ENCODE measurements at regions of chr9 and their contacts with region 1.

Region 1: DNA sequence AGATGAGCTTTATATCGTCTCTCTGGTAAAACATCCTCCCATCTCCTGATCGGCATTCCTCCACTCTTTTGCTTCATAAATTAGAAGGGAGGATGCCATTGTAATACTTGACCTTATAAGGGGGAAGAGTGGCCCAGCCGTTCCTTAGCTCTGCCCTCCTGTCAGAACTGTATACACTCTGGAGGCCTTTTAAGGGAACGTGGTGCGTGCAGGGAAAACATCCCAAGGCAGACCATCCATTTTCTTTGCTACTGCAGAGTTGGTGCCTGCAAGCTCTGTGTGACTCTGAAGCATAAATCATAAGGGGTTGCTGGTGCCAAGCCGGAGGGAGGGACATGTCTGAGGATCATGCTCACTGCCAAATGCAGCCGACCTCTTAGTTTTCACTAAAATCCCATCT is 90.4 kb downstream of the PGM5 start:
- DNase-seq: peak in 1 of 2 donors; percentile 83
- H3K4me3 ChIP-seq: no peak overlapping the region
- H3K27ac ChIP-seq: peak overlapping the region in 3 of 5 donors; percentile 40 to 83 (median 65)
- H3K4me1 ChIP-seq: peaks cover 0 to 74% (median 19%) of the 10 kb centered on the region in 4 donors
- H3K27me3 ChIP-seq: no peaks in the 10 kb centered on the region
- CTCF ChIP-seq: no peak
- EP300 ChIP-seq: peak; percentile 34
- POLR2A ChIP-seq: no peak

Region 2: GRCh38 chr9:68493958-68494577 is 47.2 kb after region 1 on chr9:
- intact Hi-C with region 1: loop called (anchors 10 kb)
- DNase-seq: no peak
- H3K4me3 ChIP-seq: no peak overlapping the region
- H3K27ac ChIP-seq: peak overlapping the region in 4 of 5 donors; percentile 16 to 76 (median 39)
- H3K4me1 ChIP-seq: peaks cover 0 to 36% (median 19%) of the 10 kb centered on the region in 4 donors
- H3K27me3 ChIP-seq: no peaks in the 10 kb centered on the region
- CTCF ChIP-seq: no peak
- EP300 ChIP-seq: no peak
- POLR2A ChIP-seq: no peak

Region 3: GRCh38 chr9:68609901-68610415 is 163.1 kb after region 1 on chr9:
- intact Hi-C with region 1: no loop called
- DNase-seq: peak in 1 of 2 donors; percentile 41
- H3K4me3 ChIP-seq: no peak overlapping the region
- H3K27ac ChIP-seq: no peak overlapping the region
- H3K4me1 ChIP-seq: no peaks in the 10 kb centered on the region
- H3K27me3 ChIP-seq: no peaks in the 10 kb centered on the region
- CTCF ChIP-seq: no peak
- EP300 ChIP-seq: no peak
- POLR2A ChIP-seq: no peak

Region 4: DNA sequence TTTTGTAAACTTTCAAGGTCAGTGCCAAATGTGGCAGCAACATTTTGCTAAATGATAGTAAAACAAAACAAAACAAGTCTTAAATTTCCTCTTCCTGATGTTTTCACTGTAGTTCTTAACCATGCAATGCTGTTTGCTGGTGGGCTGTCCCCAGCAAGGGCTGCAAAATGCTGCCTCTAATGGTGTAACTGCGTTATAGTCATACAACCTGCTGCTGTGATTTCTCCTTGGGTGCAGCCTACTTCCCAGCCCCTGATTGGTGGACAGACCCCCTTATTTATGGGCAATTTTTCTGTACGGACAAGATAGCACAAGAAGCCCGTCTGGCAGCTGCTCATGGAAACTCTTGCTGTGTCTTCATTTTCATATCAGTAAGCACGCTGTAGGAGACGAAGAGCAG is 231.6 kb after region 1 on chr9:
- intact Hi-C with region 1: no loop called
- DNase-seq: peak in 1 of 2 donors; percentile 56
- H3K4me3 ChIP-seq: no peak overlapping the region
- H3K27ac ChIP-seq: no peak overlapping the region
- H3K4me1 ChIP-seq: peaks cover 0 to under 1% (median 0%) of the 10 kb centered on the region in 4 donors
- H3K27me3 ChIP-seq: peaks cover 0 to 25% (median 0%) of the 10 kb centered on the region in 3 donors
- CTCF ChIP-seq: no peak
- EP300 ChIP-seq: no peak
- POLR2A ChIP-seq: no peak